CD4-positive, alpha-beta memory T cell (primary cell): ENCODE measurements at regions of chr10 and their contacts with region 1.

Region 1: DNA sequence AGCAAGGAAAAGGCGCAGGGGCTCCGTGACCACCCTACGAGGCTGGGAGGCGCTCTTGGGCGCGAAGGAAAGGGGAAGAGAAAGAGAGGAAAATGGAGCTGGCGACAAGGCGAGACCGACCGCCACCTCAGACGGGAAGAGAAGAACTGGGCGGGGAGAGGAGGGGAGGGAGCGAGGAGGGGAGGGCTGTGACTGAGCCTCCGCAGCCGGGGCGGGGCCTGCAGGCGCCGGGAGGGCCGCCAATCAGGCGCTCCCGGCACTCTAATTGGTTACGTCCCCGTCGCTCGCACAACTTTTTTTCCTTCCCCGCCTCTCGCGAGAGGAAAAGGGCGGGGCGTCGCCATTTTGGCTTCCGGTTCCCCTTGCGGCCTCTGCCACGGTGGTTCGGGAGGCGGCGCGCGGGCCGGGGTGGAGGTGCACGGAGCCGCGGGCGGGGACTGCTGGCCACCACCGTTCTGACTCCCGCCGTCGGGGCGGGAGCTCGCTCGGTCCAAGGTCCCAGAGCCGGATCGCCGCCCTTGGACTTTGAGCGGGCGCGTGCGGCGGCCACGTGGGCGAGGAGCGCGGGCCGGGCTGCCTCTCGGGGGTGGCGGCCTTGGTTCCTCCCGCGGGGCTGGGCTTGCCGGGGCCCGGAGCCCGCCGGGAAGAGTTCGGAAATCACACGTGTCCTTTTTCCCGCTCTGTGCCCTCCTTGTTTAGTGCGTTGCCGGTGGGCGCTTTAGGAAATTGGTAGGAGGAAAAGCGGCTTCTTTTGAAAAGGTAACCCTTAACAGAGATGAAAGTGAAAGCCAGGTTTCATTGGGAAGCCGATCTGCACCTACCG is at the start of gene GDI2:
- DNase-seq: peak; percentile 96 to 98 (median 97)
- H3K4me3 ChIP-seq: peak within 1 kb of the TSS; percentile 78 to 95
- H3K4me3 Mint-ChIP-seq: peak within 1 kb of the TSS; percentile 87 to 99 (median 95)
- H3K27ac ChIP-seq: peak within 1 kb of the TSS; percentile 98
- H3K27ac Mint-ChIP-seq: peak within 1 kb of the TSS; percentile 88 to 98 (median 97)
- H3K4me1 ChIP-seq: peaks cover 51% of the 10 kb centered on the region
- H3K4me1 Mint-ChIP-seq: peaks cover 40 to 65% (median 53%) of the 10 kb centered on the region in 4 donors
- H3K27me3 ChIP-seq: no peaks in the 10 kb centered on the region
- H3K27me3 Mint-ChIP-seq: no peaks in the 10 kb centered on the region
- total RNA-seq, gene GDI2: 137 to 140 TPM

Region 2: DNA sequence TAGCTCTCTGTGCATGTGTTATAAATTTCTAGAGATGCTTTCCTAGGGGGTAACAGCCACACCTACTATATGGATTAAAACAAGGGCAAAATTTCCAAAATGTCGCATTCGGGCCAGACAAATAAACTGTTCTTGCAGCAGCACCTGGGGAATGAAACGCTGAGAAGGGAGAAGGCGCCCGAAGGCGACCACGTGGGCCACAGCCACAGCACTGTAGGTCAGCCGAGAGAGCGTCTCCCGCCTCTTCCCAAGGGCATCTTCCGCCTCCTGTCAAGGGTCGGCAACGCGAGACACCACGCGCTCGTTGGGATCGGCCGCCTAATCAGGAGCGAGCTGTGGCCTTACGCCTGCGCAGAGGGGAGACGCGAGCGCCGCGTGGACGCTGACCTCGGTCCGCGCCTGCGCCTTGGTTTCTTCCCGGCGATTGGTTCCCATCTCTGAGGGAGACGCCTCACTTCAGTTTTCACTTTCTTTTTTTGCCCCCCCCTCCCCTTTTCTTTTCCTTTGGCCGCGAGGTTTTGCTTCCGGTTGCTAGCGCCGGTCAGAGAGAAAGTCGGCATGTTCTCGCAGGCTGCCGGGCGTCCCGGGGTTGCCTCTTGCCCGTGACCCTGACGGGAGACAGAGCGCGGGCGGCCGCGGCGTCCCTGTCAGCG is 129.1 kb before region 1 on chr10 and contains the start of gene TASOR2:
- CTCF ChIA-PET with region 1: interaction called, 3 read pairs
- POLR2A ChIA-PET with region 1: interaction called, 16 read pairs
- intact Hi-C with region 1: loop called (anchors 1 kb)
- DNase-seq: peak; percentile 92 to 93 (median 93)
- H3K4me3 ChIP-seq: peak within 1 kb of the TSS; percentile 76 to 83
- H3K4me3 Mint-ChIP-seq: peak within 1 kb of the TSS; percentile 95 to 99 (median 98)
- H3K27ac ChIP-seq: peak within 1 kb of the TSS; percentile 97
- H3K27ac Mint-ChIP-seq: peak within 1 kb of the TSS; percentile 94 to 99 (median 99)
- H3K4me1 ChIP-seq: peaks cover 48% of the 10 kb centered on the region
- H3K4me1 Mint-ChIP-seq: peaks cover 25 to 58% (median 37%) of the 10 kb centered on the region in 4 donors
- H3K27me3 ChIP-seq: no peaks in the 10 kb centered on the region
- H3K27me3 Mint-ChIP-seq: no peaks in the 10 kb centered on the region
- total RNA-seq, gene TASOR2: 69.1 to 85.7 TPM

Region 3: GRCh38 chr10:5800790-5801189 is 12.7 kb before region 1 on chr10:
- CTCF ChIA-PET with region 1: interaction called, 6 read pairs
- POLR2A ChIA-PET with region 1: interaction called, 10 read pairs
- intact Hi-C with region 1: no loop called
- DNase-seq: no peak
- H3K4me3 ChIP-seq: no peak overlapping the region
- H3K4me3 Mint-ChIP-seq: no peak overlapping the region
- H3K27ac ChIP-seq: no peak overlapping the region
- H3K27ac Mint-ChIP-seq: peak overlapping the region in 2 of 7 donors; percentile 29 to 48
- H3K4me1 ChIP-seq: peaks cover 19% of the 10 kb centered on the region
- H3K4me1 Mint-ChIP-seq: peaks cover 22 to 34% (median 24%) of the 10 kb centered on the region in 4 donors
- H3K27me3 ChIP-seq: no peaks in the 10 kb centered on the region
- H3K27me3 Mint-ChIP-seq: no peaks in the 10 kb centered on the region

Region 4: DNA sequence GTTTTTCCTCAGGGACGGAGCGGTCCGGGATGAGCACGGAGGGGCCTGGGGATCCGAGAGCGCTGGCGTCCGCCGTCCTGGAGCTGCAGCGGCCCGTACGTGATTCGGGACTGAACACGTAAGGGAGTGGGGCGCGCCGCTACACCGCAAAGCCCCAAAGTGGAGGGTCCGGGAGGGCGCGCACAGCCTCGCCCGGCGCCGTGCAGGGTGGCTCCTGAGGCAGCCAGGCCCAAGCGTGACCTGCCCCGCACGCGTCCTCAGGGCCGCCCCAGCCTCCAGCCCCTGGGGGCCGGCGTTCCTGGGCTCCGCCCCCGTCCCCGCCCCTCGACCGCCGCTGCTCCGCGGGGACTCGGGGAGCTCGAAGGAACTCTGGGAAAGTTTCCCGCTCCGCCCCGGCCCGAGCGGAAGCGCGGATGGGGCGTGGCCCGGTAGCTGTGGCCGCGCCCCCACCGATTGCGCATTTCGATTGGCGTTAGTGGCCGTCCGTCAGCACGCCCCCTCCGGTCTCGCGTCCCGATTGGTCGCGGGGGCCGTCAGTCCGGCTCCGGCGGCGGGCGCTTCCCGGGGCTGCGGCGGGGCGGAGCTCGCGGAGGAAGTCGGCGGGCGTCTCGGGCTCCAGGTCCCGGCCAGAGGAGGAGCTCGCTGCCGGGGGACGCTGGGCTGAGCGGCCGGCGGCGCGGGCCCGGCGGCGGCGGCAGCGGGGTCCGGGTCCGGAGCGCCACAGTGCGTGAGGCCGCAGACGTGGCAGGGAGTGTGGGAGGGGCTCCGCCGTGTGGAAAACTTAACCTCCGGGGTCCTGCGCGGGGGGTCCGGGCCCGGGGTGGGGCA is 76.3 kb after region 1 on chr10 and contains the starts of genes ANKRD16 and FBH1:
- CTCF ChIA-PET with region 1: no interaction called
- POLR2A ChIA-PET with region 1: interaction called, 27 read pairs
- intact Hi-C with region 1: loop called (anchors 1 kb)
- DNase-seq: peak; percentile 95 to 98 (median 95)
- H3K4me3 ChIP-seq: peak within 1 kb of the TSS; percentile 54 to 71
- H3K4me3 Mint-ChIP-seq: peak within 1 kb of the TSS; percentile 91 to 98 (median 93)
- H3K27ac ChIP-seq: peak within 1 kb of the TSS; percentile 79
- H3K27ac Mint-ChIP-seq: peak within 1 kb of the TSS; percentile 87 to 95 (median 92)
- H3K4me1 ChIP-seq: peaks cover 33% of the 10 kb centered on the region
- H3K4me1 Mint-ChIP-seq: peaks cover 36 to 58% (median 45%) of the 10 kb centered on the region in 4 donors
- H3K27me3 ChIP-seq: no peaks in the 10 kb centered on the region
- H3K27me3 Mint-ChIP-seq: no peaks in the 10 kb centered on the region
- total RNA-seq, gene ANKRD16: 6.6 to 8.4 TPM
- total RNA-seq, gene FBH1: 91.4 to 97.5 TPM

Region 5: GRCh38 chr10:6163364-6164270 is 350.1 kb after region 1 on chr10:
- CTCF ChIA-PET with region 1: no interaction called
- POLR2A ChIA-PET with region 1: no interaction called
- intact Hi-C with region 1: loop called (anchors 2 kb)
- DNase-seq: peak; percentile 90 to 94 (median 91)
- H3K4me3 ChIP-seq: peak overlapping the region; percentile 77 to 84
- H3K4me3 Mint-ChIP-seq: peak overlapping the region; percentile 77 to 95 (median 92)
- H3K27ac ChIP-seq: peak overlapping the region; percentile 89
- H3K27ac Mint-ChIP-seq: peak overlapping the region; percentile 92 to 98 (median 97)
- H3K4me1 ChIP-seq: peaks cover 55% of the 10 kb centered on the region
- H3K4me1 Mint-ChIP-seq: peaks cover 28 to 64% (median 46%) of the 10 kb centered on the region in 4 donors
- H3K27me3 ChIP-seq: no peaks in the 10 kb centered on the region
- H3K27me3 Mint-ChIP-seq: no peaks in the 10 kb centered on the region